Endothelial cell of umbilical vein (primary cell): ENCODE measurements at regions of chr12 and their contacts with region 1.

Region 1: GRCh38 chr12:52213512-52214420 is 19.3 kb upstream of the KRT7 start:
- DNase-seq: peak; percentile 90
- H3K4me3 ChIP-seq: no peak overlapping the region
- H3K27ac ChIP-seq: no peak overlapping the region
- H3K4me1 ChIP-seq: peaks cover 33% of the 10 kb centered on the region
- H3K27me3 ChIP-seq: no peaks in the 10 kb centered on the region
- CTCF ChIP-seq: peak; percentile 100
- POLR2A ChIP-seq: no peak

Region 2: GRCh38 chr12:52121824-52122539 is 91.8 kb before region 1 on chr12:
- CTCF ChIA-PET with region 1: no interaction called
- POLR2A ChIA-PET with region 1: no interaction called
- dilution Hi-C with region 1: no loop called
- intact Hi-C with region 1: no loop called
- DNase-seq: peak; percentile 33
- H3K4me3 ChIP-seq: no peak overlapping the region
- H3K27ac ChIP-seq: no peak overlapping the region
- H3K4me1 ChIP-seq: peaks cover 21% of the 10 kb centered on the region
- H3K27me3 ChIP-seq: peaks cover 0 to 1% of the 10 kb centered on the region in 2 experiments
- CTCF ChIP-seq: peak; percentile 58 to 87
- POLR2A ChIP-seq: no peak

Region 3: GRCh38 chr12:52139552-52140062 is 74.2 kb before region 1 on chr12:
- CTCF ChIA-PET with region 1: no interaction called
- POLR2A ChIA-PET with region 1: no interaction called
- dilution Hi-C with region 1: no loop called
- intact Hi-C with region 1: no loop called
- DNase-seq: no peak
- H3K4me3 ChIP-seq: no peak overlapping the region
- H3K27ac ChIP-seq: no peak overlapping the region
- H3K4me1 ChIP-seq: no peaks in the 10 kb centered on the region
- H3K27me3 ChIP-seq: peaks cover 4% of the 10 kb centered on the region in 2 experiments
- CTCF ChIP-seq: peak; percentile 69 to 71
- POLR2A ChIP-seq: no peak

Region 4: DNA sequence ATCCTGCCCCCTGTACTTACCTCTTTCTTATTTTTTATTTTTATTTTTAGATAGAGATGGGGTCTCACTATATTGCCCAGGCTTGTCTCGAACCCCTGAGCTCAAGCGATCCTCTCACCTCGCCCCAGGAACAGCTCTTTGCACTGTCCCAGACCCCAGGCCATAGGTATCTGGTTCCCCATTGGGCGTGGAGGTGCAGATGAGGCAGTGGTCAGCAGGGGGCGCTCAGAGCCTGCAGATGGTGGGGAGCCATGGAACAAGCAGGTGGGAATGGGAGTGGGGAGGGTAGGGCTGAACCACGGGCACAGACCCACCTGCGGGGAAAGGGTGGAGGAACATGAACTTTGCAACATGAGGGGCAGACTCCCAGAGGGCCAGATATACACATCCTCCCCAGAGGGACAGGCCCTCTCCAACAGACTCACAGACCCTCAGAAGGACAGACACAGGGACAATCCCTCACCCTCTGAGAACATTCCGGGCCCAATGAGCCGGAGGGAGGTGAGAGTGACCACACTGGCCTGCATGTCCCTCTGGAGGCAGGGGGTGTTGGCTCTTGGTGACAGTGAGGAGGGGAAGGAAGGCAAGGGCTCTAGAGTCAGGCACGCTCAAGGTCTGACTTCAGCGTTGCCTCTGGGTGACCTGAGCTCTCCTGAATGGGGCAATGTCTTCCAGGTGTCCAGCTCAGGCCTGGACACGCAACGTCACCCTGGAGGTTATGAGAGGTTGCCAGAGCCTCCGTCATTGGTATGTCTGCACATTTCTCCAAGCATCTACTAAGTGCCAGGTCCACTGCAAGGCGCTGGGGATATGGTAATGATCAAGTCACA is 56.8 kb before region 1 on chr12:
- CTCF ChIA-PET with region 1: interaction called, 22 read pairs
- POLR2A ChIA-PET with region 1: no interaction called
- dilution Hi-C with region 1: no loop called
- intact Hi-C with region 1: loop called (anchors 1 kb)
- DNase-seq: peak; percentile 58
- H3K4me3 ChIP-seq: no peak overlapping the region
- H3K27ac ChIP-seq: no peak overlapping the region
- H3K4me1 ChIP-seq: peaks cover 2% of the 10 kb centered on the region
- H3K27me3 ChIP-seq: no peaks in the 10 kb centered on the region
- CTCF ChIP-seq: peak; percentile 93 to 94
- POLR2A ChIP-seq: no peak

Region 5: DNA sequence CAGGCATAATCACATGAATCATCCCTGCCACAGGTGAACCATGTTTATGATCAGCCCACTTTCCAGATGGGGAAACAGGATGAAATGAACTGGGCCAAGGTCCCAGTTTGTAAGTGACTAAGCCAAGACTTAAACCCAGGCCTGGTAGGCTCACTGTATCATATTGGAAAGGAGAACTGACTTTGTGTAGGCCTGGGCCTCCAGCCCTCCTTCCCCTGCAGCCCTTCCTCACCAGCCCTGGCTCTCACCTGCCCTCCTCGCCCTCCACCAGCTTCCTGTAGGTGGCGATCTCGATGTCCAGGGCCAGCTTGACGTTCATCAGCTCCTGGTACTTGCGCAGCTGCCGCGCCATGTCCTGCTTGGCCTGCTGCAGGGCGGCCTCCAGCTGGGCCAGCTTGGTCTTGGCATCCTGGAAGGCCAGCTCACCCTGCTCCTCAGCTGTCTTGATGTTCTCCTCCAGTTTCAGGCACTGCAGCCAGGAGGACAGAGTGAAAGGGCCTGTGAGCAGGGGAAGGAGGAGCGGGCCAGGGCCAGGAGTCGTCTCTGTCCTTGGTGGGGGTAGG is 41.7 kb before region 1 on chr12:
- CTCF ChIA-PET with region 1: interaction called, 39 read pairs
- POLR2A ChIA-PET with region 1: no interaction called
- dilution Hi-C with region 1: no loop called
- intact Hi-C with region 1: loop called (anchors 1 kb)
- DNase-seq: no peak
- H3K4me3 ChIP-seq: no peak overlapping the region
- H3K27ac ChIP-seq: no peak overlapping the region
- H3K4me1 ChIP-seq: peaks cover 15% of the 10 kb centered on the region
- H3K27me3 ChIP-seq: no peaks in the 10 kb centered on the region
- CTCF ChIP-seq: peak; percentile 19 to 40
- POLR2A ChIP-seq: no peak

Region 6: GRCh38 chr12:52186145-52186840 is 27.5 kb before region 1 on chr12:
- CTCF ChIA-PET with region 1: interaction called, 138 read pairs
- POLR2A ChIA-PET with region 1: no interaction called
- dilution Hi-C with region 1: no loop called
- intact Hi-C with region 1: loop called (anchors 1 kb)
- DNase-seq: peak; percentile 72
- H3K4me3 ChIP-seq: no peak overlapping the region
- H3K27ac ChIP-seq: peak overlapping the region; percentile 79
- H3K4me1 ChIP-seq: peaks cover 67% of the 10 kb centered on the region
- H3K27me3 ChIP-seq: no peaks in the 10 kb centered on the region
- CTCF ChIP-seq: no peak
- POLR2A ChIP-seq: no peak

Region 7: GRCh38 chr12:52192173-52192791 is 21.5 kb before region 1 on chr12:
- CTCF ChIA-PET with region 1: interaction called, 138 read pairs
- POLR2A ChIA-PET with region 1: interaction called, 13 read pairs
- dilution Hi-C with region 1: no loop called
- intact Hi-C with region 1: loop called (anchors 1 kb)
- DNase-seq: peak; percentile 98
- H3K4me3 ChIP-seq: no peak overlapping the region
- H3K27ac ChIP-seq: peak overlapping the region; percentile 87
- H3K4me1 ChIP-seq: peaks cover 57% of the 10 kb centered on the region
- H3K27me3 ChIP-seq: no peaks in the 10 kb centered on the region
- CTCF ChIP-seq: no peak
- POLR2A ChIP-seq: peak; percentile 69

Region 8: DNA sequence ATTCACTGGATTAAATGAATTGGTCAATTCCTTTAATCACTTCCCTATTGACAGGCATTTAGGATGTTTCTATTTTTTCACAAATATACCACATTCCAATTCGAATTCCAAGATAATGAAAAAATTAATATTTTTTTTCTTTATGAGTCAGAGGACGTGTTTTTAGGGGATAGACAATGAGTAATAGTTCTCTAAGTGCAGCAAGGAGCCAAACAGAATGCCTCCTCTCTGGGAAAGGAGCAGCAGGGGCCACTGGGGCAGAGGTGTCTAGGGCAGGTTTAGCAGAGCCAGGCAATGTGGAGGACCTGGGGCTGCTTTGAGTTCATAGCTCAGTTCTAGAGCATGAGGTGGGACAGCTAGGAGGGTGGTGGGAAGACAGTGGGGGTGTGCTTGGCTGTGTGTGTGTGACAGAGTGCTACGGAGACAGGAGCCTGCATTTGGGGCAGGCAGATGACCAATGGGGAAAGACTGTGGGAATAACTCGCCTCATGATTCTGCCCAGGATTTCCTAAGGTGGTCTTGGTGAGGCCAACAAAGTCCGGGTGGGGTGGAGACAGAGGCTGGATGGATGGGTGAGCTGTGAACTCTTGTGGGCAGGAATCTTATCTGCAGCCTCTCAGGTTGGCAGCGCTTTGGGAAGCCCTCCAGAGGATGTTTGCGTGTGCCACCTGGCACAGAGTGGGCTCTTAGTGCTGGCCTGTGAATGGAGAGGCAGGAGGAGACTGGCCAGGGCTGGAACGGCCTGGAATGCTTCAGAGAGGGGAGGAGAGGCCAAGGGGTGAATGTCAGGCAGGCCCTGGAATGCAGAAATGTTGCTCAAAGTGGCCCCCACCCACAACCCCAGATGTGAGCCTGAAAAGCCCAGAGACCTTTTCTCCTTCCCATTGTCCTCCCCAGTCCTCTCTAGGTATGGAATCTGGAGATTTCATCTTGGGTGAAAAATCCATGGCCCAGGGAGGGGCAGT is 16.8 kb after region 1 on chr12:
- CTCF ChIA-PET with region 1: interaction called, 11 read pairs
- POLR2A ChIA-PET with region 1: no interaction called
- dilution Hi-C with region 1: no loop called
- intact Hi-C with region 1: loop called (anchors 1 kb)
- DNase-seq: peak; percentile 84
- H3K4me3 ChIP-seq: no peak overlapping the region
- H3K27ac ChIP-seq: peak overlapping the region; percentile 84
- H3K4me1 ChIP-seq: peaks cover 44% of the 10 kb centered on the region
- H3K27me3 ChIP-seq: no peaks in the 10 kb centered on the region
- CTCF ChIP-seq: no peak
- POLR2A ChIP-seq: peak; percentile 1

Region 9: DNA sequence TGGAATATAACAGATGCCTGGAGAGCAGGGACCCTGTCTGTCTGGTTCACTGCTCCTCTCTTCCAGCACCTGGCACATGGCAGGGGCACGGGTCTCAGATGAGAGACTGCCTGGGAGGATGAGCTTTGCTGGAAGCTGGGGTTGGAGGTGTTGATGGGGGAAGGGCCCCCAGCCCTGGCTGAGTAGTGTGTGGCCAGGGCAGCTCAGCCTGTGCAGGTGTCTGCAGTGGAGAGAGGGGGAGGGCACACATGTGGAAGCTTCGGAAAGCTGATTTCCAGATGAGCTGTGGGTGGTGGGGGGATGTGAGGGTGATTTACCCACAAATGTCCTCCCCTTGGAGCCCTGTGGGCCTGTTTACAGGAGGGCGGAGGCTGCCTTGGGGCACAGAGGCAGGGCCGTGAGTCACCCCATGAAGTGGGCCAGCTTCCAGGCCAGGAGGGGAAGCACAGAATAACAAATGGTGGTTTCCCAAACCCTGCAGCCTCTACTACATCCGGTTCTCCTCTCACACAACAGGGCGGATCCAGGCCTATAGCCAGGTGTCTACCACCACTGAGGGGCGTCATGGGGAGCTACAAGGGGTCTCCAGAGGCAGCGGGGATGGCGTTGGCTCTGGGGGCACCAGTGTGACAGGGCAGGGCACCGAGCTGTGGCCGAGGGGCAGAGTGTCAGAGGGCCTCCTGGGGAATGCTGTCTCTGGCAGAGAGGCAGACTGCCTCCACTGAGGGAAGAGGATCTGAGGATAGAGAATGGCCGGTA is 30.3 kb after region 1 on chr12:
- CTCF ChIA-PET with region 1: interaction called, 3 read pairs
- POLR2A ChIA-PET with region 1: no interaction called
- dilution Hi-C with region 1: no loop called
- intact Hi-C with region 1: loop called (anchors 1 kb)
- DNase-seq: peak; percentile 84
- H3K4me3 ChIP-seq: no peak overlapping the region
- H3K27ac ChIP-seq: peak overlapping the region; percentile 61
- H3K4me1 ChIP-seq: peaks cover 23% of the 10 kb centered on the region
- H3K27me3 ChIP-seq: no peaks in the 10 kb centered on the region
- CTCF ChIP-seq: no peak
- POLR2A ChIP-seq: peak; percentile 23